ENCODE measurements at regions of chr12 and their contacts with region 1.

Region 1: GRCh38 chr12:10196210-10196609 is 16.5 kb upstream of the GABARAPL1 start:
- DNase-seq: no peak
- H3K4me3 ChIP-seq: no peak overlapping the region
- H3K4me3 Mint-ChIP-seq: no peak overlapping the region
- H3K27ac Mint-ChIP-seq: no peak overlapping the region
- H3K4me1 ChIP-seq: peaks cover 15% of the 10 kb centered on the region
- H3K4me1 Mint-ChIP-seq: peaks cover 26% of the 10 kb centered on the region
- H3K27me3 ChIP-seq: no peaks in the 10 kb centered on the region
- H3K27me3 Mint-ChIP-seq: no peaks in the 10 kb centered on the region
- CTCF ChIP-seq: no peak

Region 2: GRCh38 chr12:9651265-9651729 is 544.9 kb before region 1 on chr12:
- CTCF ChIA-PET with region 1: no interaction called
- POLR2A ChIA-PET with region 1: no interaction called
- intact Hi-C with region 1: no loop called
- DNase-seq: no peak
- H3K4me3 ChIP-seq: no peak overlapping the region
- H3K4me3 Mint-ChIP-seq: no peak overlapping the region
- H3K27ac Mint-ChIP-seq: no peak overlapping the region
- H3K4me1 ChIP-seq: peaks cover 24% of the 10 kb centered on the region
- H3K4me1 Mint-ChIP-seq: peaks cover 40% of the 10 kb centered on the region
- H3K27me3 ChIP-seq: no peaks in the 10 kb centered on the region
- H3K27me3 Mint-ChIP-seq: no peaks in the 10 kb centered on the region
- CTCF ChIP-seq: no peak

Region 3: GRCh38 chr12:10227648-10228047 is 31.4 kb after region 1 on chr12:
- CTCF ChIA-PET with region 1: no interaction called
- POLR2A ChIA-PET with region 1: no interaction called
- intact Hi-C with region 1: no loop called
- DNase-seq: no peak
- H3K4me3 ChIP-seq: no peak overlapping the region
- H3K4me3 Mint-ChIP-seq: no peak overlapping the region
- H3K27ac Mint-ChIP-seq: no peak overlapping the region
- H3K4me1 ChIP-seq: no peaks in the 10 kb centered on the region
- H3K4me1 Mint-ChIP-seq: no peaks in the 10 kb centered on the region
- H3K27me3 ChIP-seq: no peaks in the 10 kb centered on the region
- H3K27me3 Mint-ChIP-seq: no peaks in the 10 kb centered on the region
- CTCF ChIP-seq: no peak

Region 4: GRCh38 chr12:11162502-11162901 is 966.3 kb after region 1 on chr12:
- CTCF ChIA-PET with region 1: no interaction called
- POLR2A ChIA-PET with region 1: interaction called, 17 read pairs
- intact Hi-C with region 1: no loop called
- DNase-seq: no peak
- H3K4me3 ChIP-seq: no peak overlapping the region
- H3K4me3 Mint-ChIP-seq: no peak overlapping the region
- H3K27ac Mint-ChIP-seq: no peak overlapping the region
- H3K4me1 ChIP-seq: no peaks in the 10 kb centered on the region
- H3K4me1 Mint-ChIP-seq: no peaks in the 10 kb centered on the region
- H3K27me3 ChIP-seq: no peaks in the 10 kb centered on the region
- H3K27me3 Mint-ChIP-seq: no peaks in the 10 kb centered on the region
- CTCF ChIP-seq: no peak